CD14-positive monocyte (primary cell): ENCODE measurements at regions of chr20 and their contacts with region 1.

Region 1: GRCh38 chr20:44651684-44652423 is at the start of gene ADA:
- DNase-seq: peak in 2 of 3 donors; percentile 34 to 64
- H3K4me3 ChIP-seq: peak within 1 kb of the TSS; percentile 71 to 91 (median 81)
- H3K4me3 Mint-ChIP-seq: peak within 1 kb of the TSS; percentile 80 to 98
- H3K27ac ChIP-seq: peak within 1 kb of the TSS; percentile 47 to 84
- H3K27ac Mint-ChIP-seq: peak within 1 kb of the TSS; percentile 8 to 87 (median 57)
- H3K4me1 ChIP-seq: peaks cover 39 to 45% of the 10 kb centered on the region in 2 donors
- H3K4me1 Mint-ChIP-seq: peaks cover 51% of the 10 kb centered on the region
- H3K27me3 ChIP-seq: no peaks in the 10 kb centered on the region
- H3K27me3 Mint-ChIP-seq: peaks cover 0 to 9% (median 7%) of the 10 kb centered on the region in 3 donors
- CTCF ChIP-seq: no peak
- polyA plus RNA-seq, gene ADA: 11.1 to 17.2 (median 15.6) TPM

Region 2: DNA sequence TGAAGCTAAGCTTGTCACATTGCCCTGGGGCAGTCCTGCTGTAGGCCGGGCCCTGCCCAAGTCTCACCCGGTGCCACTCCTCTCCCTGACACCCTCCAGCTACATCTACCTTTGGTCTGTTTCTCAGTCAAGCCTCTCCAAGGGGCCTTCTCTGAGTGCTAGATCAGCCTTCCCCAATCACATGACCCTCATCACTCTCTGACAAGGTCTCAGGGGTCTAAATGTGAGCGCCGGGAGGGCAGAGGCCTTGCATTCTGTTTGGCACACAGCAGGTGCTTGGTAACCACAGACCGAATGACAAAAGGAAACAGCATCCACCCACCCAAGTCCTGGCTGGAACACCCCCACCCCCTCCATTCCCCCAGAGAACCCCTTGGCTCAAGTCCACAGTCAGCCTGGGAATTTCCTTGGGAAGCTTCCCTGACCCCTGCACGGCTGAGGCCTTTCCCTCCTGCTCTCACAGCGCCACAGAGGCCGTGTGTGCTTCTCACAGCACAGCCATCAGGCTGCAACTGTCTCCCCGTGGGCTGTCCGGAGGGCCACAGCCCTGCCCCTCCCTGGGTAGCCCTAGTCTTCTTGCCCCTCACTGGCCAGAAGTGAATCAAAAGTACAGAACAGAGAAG is 36.6 kb before region 1 on chr20:
- intact Hi-C with region 1: loop called (anchors 5 kb)
- DNase-seq: no peak
- H3K4me3 ChIP-seq: no peak overlapping the region
- H3K4me3 Mint-ChIP-seq: no peak overlapping the region
- H3K27ac ChIP-seq: no peak overlapping the region
- H3K27ac Mint-ChIP-seq: peak overlapping the region in 2 of 7 donors; percentile 50 to 58
- H3K4me1 ChIP-seq: peaks cover 11 to 12% of the 10 kb centered on the region in 2 donors
- H3K4me1 Mint-ChIP-seq: peaks cover 17% of the 10 kb centered on the region
- H3K27me3 ChIP-seq: no peaks in the 10 kb centered on the region
- H3K27me3 Mint-ChIP-seq: peaks cover 0 to 2% (median 0%) of the 10 kb centered on the region in 3 donors
- CTCF ChIP-seq: no peak